ENCODE measurements at regions of chr1 and their contacts with region 1.

Region 1: DNA sequence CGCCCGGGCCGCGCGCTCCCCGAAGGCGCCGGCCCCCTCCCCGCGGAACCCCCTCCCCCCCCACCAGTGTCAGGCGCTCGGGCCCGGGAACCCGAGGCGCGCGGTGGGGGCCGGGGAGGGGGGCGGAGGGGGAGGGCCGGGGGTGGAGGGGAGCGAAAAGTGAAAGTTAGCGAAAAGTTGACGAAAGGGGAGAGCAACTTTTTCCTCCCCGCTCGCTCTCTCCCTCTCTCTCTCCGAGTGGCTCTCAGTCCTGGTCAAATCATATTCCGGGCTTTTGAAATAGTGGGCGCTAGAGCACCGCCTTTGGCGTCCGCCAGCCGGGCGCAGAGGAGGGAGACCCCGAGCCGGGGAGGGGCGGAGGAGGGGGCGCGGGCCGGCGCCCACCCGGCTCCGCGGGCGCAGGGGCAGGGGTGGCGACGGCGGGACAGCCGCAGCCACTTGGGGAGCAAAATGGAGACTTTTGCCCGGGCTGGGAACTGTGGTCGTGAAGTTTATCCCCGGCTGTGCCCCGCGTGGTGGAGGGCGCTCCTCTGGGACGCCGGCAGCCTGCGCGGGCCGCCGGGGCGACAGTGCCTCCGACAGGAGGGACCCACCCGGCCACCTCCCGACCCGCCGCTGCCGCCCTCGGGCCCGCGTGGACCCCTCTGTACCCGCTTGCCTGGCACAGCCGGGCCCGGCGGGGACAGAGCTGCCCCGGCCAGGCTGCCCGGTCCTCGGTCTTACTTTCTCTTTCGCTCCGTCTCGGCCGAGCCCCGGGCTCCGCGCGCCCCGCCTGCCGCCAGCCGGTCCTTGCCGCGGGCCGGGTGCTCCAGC is 694 bp downstream of the PRDM16 start:
- DNase-seq: peak; percentile 77 to 79
- H3K4me3 ChIP-seq: peak overlapping the region; percentile 58 to 74 (median 62)
- H3K27ac ChIP-seq: peak overlapping the region; percentile 99 to 100 (median 99)
- H3K4me1 ChIP-seq: peaks cover 41 to 51% of the 10 kb centered on the region in 2 donors
- H3K27me3 ChIP-seq: no peaks in the 10 kb centered on the region
- CTCF ChIP-seq: peak in 3 of 6 experiments; percentile 17 to 50 (median 46)
- POLR2A ChIP-seq: peak in 1 of 2 donors; percentile 11

Region 2: GRCh38 chr1:3035563-3036460 is 33.9 kb before region 1 on chr1:
- intact Hi-C with region 1: no loop called
- DNase-seq: no peak
- H3K4me3 ChIP-seq: no peak overlapping the region
- H3K27ac ChIP-seq: peak overlapping the region in 1 of 3 donors; percentile 24
- H3K4me1 ChIP-seq: no peaks in the 10 kb centered on the region
- H3K27me3 ChIP-seq: no peaks in the 10 kb centered on the region
- CTCF ChIP-seq: no peak
- POLR2A ChIP-seq: no peak

Region 3: DNA sequence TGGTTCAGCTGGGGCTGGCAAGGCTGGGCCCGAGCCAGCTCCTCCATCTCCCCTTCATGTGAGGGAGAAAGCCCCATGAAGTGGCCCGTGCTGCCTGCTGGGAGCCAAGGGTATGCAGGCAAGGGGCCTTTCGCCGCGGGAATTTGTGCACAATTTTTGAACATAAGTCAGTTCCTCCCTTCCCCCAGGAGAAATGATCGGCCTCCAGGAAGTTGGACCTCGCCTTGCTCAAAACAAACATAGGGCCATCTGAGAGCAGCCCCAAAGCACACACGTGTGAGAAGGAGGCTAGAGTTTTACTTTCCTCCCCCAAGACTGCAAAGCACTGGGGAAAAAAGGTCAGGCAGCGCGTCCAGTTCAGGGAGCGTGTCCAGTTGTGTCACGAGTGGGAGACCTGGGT is 64.0 kb after region 1 on chr1:
- intact Hi-C with region 1: loop called (anchors 5 kb)
- DNase-seq: peak; percentile 80 to 82
- H3K4me3 ChIP-seq: no peak overlapping the region
- H3K27ac ChIP-seq: peak overlapping the region; percentile 46 to 84 (median 77)
- H3K4me1 ChIP-seq: peaks cover 40 to 69% of the 10 kb centered on the region in 2 donors
- H3K27me3 ChIP-seq: no peaks in the 10 kb centered on the region
- CTCF ChIP-seq: no peak
- POLR2A ChIP-seq: no peak

Region 4: GRCh38 chr1:3244927-3245315 is 175.2 kb after region 1 on chr1:
- intact Hi-C with region 1: loop called (anchors 5 kb)
- DNase-seq: no peak
- H3K4me3 ChIP-seq: no peak overlapping the region
- H3K27ac ChIP-seq: no peak overlapping the region
- H3K4me1 ChIP-seq: peaks cover 48 to 49% of the 10 kb centered on the region in 2 donors
- H3K27me3 ChIP-seq: no peaks in the 10 kb centered on the region
- CTCF ChIP-seq: no peak
- POLR2A ChIP-seq: no peak

Region 5: DNA sequence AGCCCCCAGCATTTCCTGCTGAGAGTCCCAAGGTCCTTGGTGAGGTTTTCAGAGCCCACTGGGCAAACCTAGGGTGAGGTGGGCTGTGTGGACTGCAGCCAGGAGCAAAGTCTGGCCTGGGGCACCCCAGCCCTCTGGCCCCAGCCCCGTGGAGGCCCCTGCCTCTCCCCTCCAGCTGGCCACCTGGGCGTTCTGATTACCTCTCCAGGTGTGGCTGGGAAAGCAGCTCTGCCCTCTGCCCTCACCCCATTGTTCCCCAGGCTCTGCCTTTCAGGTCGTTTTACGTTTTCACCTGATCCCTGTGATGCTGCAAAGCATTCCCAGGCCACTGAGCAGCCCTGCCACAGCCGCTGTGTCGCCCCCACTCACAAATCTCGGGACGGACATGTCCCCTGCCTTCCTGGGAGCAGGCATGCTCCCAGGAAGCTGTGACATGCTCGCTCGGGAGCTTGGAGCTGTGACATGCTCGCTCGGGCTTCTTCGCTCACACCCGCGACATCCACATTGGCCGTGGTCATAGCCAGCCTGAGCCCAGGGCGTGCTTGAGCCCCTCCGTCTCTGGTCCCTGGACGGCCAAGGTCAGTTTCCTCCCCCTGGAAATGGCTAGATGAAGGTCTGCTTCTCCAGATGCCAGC is 215.5 kb after region 1 on chr1:
- intact Hi-C with region 1: loop called (anchors 5 kb)
- DNase-seq: no peak
- H3K4me3 ChIP-seq: no peak overlapping the region
- H3K27ac ChIP-seq: no peak overlapping the region
- H3K4me1 ChIP-seq: peaks cover 8 to 19% of the 10 kb centered on the region in 2 donors
- H3K27me3 ChIP-seq: no peaks in the 10 kb centered on the region
- CTCF ChIP-seq: no peak
- POLR2A ChIP-seq: no peak

Region 6: DNA sequence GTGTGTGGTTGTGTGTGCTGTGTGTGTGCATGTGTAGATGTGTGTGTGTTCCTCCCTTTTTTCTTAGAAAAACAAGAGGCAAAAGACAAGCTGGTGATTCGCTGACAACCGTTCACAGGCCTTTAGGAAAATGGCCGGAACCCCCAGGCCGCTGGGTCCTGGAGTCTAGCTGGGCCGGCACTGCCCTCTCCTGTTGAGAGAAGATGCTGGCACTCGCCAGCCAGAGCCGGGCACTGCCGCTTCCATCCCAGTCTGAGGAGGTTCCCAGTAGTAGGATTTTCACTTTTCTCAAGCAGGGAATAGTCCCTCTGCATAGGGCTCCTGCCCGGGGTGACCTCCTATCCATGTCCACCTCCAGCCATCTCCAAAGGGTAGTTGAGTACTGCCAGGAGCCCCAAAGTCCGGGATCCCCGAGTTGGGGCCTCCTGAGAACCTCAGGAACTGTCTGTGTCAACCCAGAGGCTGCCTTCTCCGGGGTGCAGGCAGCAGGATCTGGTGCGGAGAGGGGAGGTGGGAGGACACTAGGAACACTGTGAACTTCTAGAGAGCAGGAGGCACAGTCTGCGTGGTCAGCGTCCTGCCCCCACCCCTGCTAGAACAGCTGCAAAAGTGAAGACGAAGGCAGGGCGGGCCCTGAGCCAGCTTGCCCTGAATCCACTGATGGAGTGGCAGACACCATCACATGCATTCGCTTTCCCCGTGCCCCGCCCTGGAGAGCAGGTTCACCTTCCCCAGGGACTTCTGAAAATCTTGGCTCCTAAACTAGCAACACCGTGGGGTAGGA is 340.6 kb after region 1 on chr1:
- intact Hi-C with region 1: loop called (anchors 5 kb)
- DNase-seq: peak; percentile 83 to 87
- H3K4me3 ChIP-seq: no peak overlapping the region
- H3K27ac ChIP-seq: no peak overlapping the region
- H3K4me1 ChIP-seq: no peaks in the 10 kb centered on the region
- H3K27me3 ChIP-seq: no peaks in the 10 kb centered on the region
- CTCF ChIP-seq: peak; percentile 44 to 90 (median 85)
- POLR2A ChIP-seq: no peak

Region 7: DNA sequence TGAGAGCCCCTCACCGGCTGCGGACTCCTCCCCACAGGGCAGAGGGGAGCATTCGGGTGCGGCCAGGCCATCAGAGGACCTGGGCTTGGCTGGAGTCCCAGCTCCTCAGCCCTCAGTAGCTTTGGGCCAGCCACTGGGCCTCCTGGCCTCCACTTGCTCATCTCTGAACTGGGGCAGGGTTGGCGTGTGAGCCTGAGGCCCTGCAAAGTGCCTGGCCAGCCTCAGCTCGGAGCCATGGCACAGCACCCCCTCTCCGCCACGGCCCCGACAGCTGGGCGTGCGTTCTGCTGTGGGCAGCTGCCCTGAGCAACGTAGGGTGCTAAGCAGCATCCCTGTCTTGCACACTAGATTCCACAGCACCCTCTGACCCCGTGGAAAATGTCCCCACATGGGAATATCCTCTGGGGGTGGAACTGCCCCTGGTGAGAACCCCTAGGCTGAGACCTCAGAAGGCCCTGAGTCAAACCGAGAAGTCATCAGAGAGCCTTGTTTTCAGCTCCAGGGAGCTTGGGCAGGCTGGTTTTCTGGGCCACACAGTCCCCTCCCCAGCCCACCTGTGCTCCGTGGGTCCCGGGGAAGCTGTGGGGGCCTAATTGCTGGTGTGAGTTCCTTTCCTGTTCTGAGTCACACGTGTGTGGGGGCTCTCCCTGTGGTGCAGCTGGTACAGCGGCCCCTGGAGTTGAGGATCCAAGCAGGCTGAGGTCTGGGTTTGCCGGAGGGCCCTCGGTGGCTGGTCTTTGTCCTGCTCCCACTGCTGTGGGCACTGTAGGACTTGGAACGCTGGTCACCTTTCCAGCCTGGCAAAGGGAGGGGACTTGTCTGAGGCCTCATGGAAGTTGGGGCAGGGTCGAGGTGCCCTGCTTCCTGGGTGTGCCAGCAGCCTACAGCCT is 607.1 kb after region 1 on chr1:
- intact Hi-C with region 1: no loop called
- DNase-seq: no peak
- H3K4me3 ChIP-seq: no peak overlapping the region
- H3K27ac ChIP-seq: no peak overlapping the region
- H3K4me1 ChIP-seq: peaks cover 0 to 5% of the 10 kb centered on the region in 2 donors
- H3K27me3 ChIP-seq: no peaks in the 10 kb centered on the region
- CTCF ChIP-seq: no peak
- POLR2A ChIP-seq: no peak